Dendritic cell treated with granulocyte-macrophage colony-stimulating factor and Interleukin-4, amounts not matched to agents 40 ng/mL and 50 ng/mL, for 4 days (primary cell): ENCODE measurements at regions of chr11 and their contacts with region 1.

Region 1: DNA sequence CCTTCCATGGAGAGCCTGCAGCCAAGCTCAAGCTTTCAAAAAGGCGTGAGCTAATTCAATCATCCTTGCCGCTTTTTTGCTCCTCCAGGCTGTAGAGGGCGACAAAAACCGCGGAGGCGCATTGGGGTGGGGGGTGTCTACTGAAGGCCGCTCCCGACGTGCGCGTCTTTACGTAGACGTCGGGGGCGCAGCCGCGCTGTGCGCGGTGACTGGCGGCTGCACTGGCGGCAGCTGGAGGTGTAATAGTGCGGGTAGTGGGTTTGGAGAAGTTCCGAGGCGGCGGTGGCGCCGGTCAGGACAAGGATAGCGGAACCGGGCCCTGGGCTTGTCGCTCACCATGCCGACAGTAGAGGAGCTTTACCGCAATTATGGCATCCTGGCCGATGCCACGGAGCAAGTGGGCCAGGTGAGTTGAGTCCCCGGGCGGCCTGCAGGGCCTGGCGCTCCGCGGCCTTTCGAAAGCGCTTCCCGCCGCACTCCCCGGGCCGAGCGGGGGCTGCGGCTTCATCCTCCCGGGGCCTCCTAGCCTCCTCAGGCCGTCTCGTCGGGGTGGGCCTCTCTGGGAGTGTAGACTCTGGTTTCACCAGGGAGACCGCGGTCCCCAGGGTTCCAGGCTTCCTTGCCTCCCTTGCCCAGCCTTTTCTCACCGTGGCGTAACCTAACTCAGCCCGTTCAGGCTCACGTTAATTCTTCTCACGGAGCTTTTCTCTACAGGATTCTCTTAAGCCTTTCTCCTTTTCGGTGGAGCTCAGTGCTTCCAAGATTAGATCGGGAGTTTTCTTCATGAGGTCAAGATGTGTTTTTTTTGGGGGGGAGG is at the start of gene API5:
- H3K4me3 Mint-ChIP-seq: peak within 1 kb of the TSS; percentile 86
- H3K27ac Mint-ChIP-seq: peak within 1 kb of the TSS; percentile 89
- H3K4me1 Mint-ChIP-seq: peaks cover 21% of the 10 kb centered on the region
- H3K27me3 Mint-ChIP-seq: no peaks in the 10 kb centered on the region

Region 2: GRCh38 chr11:43200031-43200430 is 112.0 kb before region 1 on chr11:
- intact Hi-C with region 1: no loop called
- H3K4me3 Mint-ChIP-seq: no peak overlapping the region
- H3K27ac Mint-ChIP-seq: no peak overlapping the region
- H3K4me1 Mint-ChIP-seq: no peaks in the 10 kb centered on the region
- H3K27me3 Mint-ChIP-seq: no peaks in the 10 kb centered on the region

Region 3: DNA sequence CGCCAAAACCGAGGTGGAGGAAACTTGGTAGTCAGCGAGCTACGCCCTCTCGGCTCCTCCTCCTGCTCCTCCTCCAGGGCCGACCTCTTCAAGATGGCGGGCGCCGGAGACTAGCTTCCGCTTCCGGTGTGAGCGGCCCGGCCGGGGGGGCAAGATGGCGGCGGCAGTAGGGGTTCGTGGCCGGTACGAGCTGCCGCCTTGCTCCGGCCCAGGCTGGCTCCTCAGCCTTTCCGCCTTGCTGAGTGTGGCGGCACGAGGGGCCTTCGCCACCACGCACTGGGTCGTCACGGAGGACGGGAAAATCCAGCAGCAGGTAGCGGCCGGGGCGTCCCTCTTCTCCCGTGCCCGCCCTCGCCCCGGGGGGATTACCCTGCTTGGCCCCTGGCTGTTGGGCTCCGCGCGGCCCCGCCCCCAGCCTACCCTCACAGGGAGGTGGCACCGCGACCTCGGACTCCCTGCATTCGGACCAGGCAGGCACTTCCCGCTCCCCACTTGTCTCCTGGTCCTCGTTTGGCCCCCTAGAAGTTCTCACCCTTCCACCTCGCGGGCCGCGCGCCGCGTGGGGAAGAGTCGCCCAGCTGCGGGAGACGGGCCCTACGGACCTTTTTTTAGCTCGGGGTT is 46.9 kb after region 1 on chr11 and contains the start of gene TTC17:
- intact Hi-C with region 1: loop called (anchors 2 kb)
- H3K4me3 Mint-ChIP-seq: peak within 1 kb of the TSS; percentile 98
- H3K27ac Mint-ChIP-seq: peak within 1 kb of the TSS; percentile 98
- H3K4me1 Mint-ChIP-seq: peaks cover 32% of the 10 kb centered on the region
- H3K27me3 Mint-ChIP-seq: peaks cover 2% of the 10 kb centered on the region

Region 4: DNA sequence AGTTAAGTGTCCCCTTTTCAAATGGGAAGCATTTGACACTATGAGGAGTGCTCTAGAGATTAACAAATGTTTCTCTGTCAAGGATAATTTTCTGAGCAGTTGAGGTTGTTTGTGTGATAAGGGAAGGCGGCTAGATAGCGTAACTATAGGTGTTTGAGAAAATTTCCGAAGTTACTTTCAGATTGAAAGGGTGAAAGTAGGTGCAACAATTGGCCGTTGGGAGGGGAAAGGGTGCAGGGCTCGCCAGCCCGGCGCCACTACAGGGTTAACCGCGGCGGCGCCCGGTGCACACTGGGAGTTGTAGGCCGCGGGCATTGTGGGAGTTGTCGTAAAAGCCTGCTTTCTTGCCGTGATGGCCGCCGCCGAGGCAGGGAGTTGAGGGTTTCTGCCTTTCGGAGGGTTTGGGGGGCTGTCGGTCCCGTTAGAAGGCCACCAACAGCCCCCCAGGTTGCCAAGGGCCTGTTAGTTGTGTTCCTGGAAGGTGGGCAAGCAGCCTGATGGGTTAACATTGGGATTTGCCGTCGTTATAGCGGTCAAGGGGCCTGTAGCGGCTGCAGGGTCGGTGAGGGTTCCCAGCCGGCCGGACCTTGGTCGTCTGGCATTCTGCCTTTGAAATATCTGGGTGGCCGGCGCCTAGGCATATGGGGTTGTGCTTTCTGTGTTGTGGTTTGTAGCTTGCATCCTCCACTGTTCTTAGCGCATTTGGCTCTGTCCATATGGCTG is 332.1 kb after region 1 on chr11:
- intact Hi-C with region 1: loop called (anchors 2 kb)
- H3K4me3 Mint-ChIP-seq: peak overlapping the region; percentile 96
- H3K27ac Mint-ChIP-seq: peak overlapping the region; percentile 91
- H3K4me1 Mint-ChIP-seq: peaks cover 11% of the 10 kb centered on the region
- H3K27me3 Mint-ChIP-seq: peaks cover 12% of the 10 kb centered on the region

Region 5: DNA sequence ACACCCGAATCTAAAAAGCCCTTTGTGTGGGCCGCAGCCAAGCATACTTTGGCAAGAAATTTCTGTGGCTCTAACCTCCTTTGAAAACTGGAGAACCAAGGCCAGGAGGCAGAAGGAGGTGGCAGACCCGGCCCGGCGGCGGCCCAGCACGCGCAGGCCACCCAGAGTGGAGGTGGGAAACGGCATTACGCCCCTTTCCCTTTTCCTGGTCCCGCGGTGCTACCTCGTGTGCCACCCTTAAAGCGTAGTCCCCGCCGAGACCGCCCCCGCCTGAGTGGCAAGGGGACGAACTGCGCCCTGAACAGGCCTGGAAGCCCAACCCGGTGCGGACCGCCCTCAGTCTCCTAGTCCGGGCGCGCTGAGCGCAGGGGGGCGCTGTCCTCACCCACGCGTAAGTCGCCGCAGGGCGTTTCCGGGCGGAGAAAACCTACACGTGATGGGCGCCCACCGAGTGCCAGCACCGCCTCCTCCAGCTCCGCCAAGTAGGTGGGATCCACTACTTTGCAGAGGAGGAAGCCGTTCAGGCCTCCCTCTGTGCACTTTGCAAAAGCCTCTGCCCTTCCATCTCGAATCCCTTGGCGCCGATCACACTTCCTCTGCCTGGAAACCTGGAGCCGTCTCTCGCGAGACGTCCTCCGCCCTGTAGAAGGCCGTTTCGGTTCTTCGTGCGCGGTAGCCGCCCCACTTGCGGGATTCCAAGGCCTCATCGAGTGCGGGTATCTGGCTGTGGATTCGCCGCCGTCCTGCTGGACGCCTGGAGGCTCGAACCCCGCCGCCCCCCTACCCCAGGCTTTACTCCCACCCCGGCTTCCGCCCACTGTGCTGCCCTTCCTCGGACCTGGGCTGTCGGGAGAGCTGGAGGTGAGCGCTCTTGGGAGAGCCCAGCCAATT is 754.1 kb after region 1 on chr11 and contains the start of gene ACCS:
- intact Hi-C with region 1: loop called (anchors 10 kb)
- H3K4me3 Mint-ChIP-seq: peak within 1 kb of the TSS; percentile 91
- H3K27ac Mint-ChIP-seq: peak within 1 kb of the TSS; percentile 98
- H3K4me1 Mint-ChIP-seq: peaks cover 26% of the 10 kb centered on the region
- H3K27me3 Mint-ChIP-seq: peaks cover 5% of the 10 kb centered on the region